ENCODE measurements at regions of chr13 and their contacts with region 1.

Region 1: DNA sequence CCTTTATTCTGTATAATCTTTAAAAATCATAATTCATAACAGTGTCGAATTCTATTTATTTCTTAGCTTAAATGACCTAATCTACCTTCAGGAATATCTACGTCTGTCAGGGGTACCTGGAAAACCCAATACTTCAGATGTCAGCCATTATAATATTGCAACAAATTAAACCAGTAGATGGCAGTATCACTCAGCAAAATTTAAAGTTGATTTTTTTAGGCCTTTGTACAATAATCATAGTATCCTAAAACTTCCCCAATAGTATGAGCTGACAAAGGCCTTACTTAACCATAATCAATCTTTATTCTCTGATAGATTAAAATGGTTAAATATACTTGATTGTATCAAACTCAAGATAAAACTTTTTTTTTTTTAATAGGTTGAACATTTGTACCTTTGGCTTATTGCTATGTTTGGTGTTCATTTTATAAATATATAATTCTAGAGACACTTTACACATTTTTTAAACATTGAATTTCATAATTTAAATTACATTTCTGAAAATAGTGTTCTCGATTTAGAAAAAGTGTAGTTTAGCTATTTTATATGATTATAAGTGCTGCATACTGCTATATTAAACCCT is 830.2 kb upstream of the SPRY2 start:
- DNase-seq: peak; percentile 5
- ATAC-seq: no peak
- H3K4me3 ChIP-seq: no peak overlapping the region
- H3K27ac ChIP-seq: no peak overlapping the region
- H3K4me1 ChIP-seq: no peaks in the 10 kb centered on the region
- H3K27me3 ChIP-seq: no peaks in the 10 kb centered on the region
- CTCF ChIP-seq: peak; percentile 46; the same call in 1 of the 2 replicates

Region 2: DNA sequence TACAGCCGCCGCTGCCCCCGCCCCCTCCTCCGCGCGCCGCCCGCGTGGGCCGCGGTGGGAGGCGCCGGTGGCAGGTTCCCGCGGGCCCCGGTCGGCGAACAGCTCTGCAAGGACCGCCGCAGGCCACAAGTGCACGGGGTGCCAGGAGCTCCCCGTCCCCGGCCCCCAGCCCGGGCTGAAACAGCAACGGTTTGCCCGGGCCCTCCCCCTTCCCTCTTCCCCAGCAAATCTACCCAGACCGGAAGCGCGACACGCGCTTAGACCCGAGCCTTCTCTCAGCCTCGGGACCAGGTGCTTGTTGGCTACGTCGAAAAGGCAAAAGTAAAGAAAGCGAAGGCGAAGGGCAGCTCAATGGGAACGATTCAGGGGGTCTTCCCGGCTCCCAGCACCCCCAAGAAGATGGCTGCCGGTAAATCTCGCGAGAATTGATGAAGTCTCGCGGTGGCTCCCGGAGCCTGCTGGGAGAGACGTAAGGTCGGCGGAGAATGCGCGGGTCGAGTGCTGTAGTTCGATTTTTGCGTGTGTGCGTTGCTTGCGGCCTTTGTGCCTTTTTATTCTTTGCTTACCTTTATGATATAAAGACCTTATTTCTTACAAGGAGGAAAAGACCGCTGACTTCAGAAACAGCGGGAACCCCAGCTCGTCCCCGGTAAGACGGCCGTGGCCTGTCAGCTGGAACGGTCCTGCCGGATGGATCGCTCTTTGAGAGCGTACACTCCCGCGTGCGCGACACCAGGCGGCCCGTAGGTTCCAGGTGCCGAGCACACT is 1765.1 kb before region 1 on chr13 and contains the start of gene RBM26:
- CTCF ChIA-PET with region 1: no interaction called
- POLR2A ChIA-PET with region 1: interaction called, 17 read pairs
- in situ Hi-C with region 1: no loop called
- intact Hi-C with region 1: no loop called
- DNase-seq: peak; percentile 70
- ATAC-seq: peak; percentile 95
- H3K4me3 ChIP-seq: peak within 1 kb of the TSS; percentile 79 to 92
- H3K27ac ChIP-seq: peak within 1 kb of the TSS; percentile 92
- H3K4me1 ChIP-seq: peaks cover 28% of the 10 kb centered on the region
- H3K27me3 ChIP-seq: no peaks in the 10 kb centered on the region
- CTCF ChIP-seq: no peak
- total RNA-seq, gene RBM26: 32.2 TPM

Region 3: DNA sequence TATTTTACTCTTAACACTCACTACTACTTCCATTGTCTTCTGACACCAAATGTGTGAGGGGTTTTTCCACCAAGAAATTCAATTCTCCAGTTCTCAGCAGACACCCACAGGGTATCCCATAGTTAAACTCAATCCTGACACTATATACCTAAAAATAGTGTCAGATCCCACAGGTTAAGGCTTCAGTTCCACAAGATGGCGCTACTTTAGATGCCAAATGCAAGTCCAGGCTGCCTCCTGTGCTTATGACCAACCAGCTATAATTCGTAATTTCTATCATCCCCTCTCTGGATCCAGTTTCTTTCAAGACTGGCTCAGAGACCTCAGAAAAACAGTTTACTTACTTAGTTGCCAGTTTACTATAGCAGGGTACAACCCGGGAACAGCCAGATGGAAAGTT is 316.0 kb after region 1 on chr13:
- CTCF ChIA-PET with region 1: no interaction called
- POLR2A ChIA-PET with region 1: no interaction called
- in situ Hi-C with region 1: no loop called
- intact Hi-C with region 1: loop called (anchors 10 kb)
- DNase-seq: no peak
- ATAC-seq: no peak
- H3K4me3 ChIP-seq: no peak overlapping the region
- H3K27ac ChIP-seq: no peak overlapping the region
- H3K4me1 ChIP-seq: no peaks in the 10 kb centered on the region
- H3K27me3 ChIP-seq: no peaks in the 10 kb centered on the region
- CTCF ChIP-seq: peak; percentile 36